ENCODE measurements at regions of chr6 and their contacts with region 1.

Region 1: DNA sequence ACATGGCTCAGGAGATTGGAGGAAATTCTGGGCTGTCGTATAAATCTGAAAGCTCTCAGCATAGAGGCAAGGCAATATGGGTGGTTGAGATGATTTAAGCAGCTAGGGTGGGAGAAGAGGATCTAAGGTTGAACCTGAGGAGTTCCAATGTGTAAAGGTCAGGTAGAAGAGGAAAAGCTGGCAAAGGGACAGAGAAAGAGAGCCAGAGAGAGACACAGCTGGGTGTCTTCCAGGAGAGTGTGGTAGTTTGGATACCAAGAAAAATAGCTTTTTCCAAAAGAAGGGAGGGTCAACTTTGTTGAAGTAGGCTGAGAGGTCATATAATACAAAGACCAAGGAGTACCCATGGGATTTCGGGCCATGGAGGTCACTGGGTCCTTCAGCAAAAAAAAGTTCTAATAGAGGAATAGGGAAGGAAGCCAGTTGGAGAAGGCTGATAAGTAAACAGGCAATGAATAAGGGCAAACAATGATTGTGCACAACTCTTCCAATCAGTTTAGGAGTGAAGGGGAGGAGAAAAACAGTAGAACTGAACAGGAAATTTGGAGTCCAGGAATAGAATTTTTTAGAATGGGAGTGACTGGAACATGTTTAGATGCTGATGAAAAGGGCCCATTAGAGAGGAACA is 135.1 kb downstream of the QRSL1 start:
- DNase-seq: no peak
- ATAC-seq: no peak
- H3K4me3 ChIP-seq: no peak overlapping the region
- H3K27ac ChIP-seq: no peak overlapping the region
- H3K4me1 ChIP-seq: no peaks in the 10 kb centered on the region
- H3K27me3 ChIP-seq: no peaks in the 10 kb centered on the region
- CTCF ChIP-seq: no peak
- POLR2A ChIP-seq: no peak

Region 2: DNA sequence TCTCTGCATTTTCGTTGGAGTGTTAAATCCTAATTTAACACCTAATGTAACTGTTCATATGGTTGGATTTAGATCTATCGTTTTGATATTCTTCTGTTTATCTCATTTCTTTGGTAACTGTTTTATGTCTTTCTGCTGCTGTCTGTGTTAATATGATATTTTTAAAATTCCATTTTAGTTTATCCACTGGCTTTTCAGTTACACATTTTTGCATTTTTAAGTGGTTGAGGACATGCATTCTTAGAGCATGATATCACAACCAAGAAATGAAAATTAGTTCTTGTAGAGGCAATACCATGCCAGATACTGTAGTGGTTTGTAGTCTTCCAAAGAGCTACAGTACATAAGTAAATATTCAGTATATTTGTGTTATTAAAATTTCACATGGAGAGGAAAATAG is 1749.0 kb before region 1 on chr6:
- intact Hi-C with region 1: loop called in 1 of 10 experiments (anchors 10 kb)
- DNase-seq: no peak
- ATAC-seq: no peak
- H3K4me3 ChIP-seq: no peak overlapping the region
- H3K27ac ChIP-seq: no peak overlapping the region
- H3K4me1 ChIP-seq: no peaks in the 10 kb centered on the region
- H3K27me3 ChIP-seq: no peaks in the 10 kb centered on the region
- CTCF ChIP-seq: no peak
- POLR2A ChIP-seq: no peak